ENCODE measurements at regions of chr4 and their contacts with region 1.

Region 1: GRCh38 chr4:158578476-158578875 is 56.8 kb downstream of the RXFP1 start:
- DNase-seq: no peak
- H3K4me3 ChIP-seq: no peak overlapping the region
- H3K27ac ChIP-seq: no peak overlapping the region
- H3K27me3 ChIP-seq: no peaks in the 10 kb centered on the region
- CTCF ChIP-seq: peak; percentile 58

Region 2: DNA sequence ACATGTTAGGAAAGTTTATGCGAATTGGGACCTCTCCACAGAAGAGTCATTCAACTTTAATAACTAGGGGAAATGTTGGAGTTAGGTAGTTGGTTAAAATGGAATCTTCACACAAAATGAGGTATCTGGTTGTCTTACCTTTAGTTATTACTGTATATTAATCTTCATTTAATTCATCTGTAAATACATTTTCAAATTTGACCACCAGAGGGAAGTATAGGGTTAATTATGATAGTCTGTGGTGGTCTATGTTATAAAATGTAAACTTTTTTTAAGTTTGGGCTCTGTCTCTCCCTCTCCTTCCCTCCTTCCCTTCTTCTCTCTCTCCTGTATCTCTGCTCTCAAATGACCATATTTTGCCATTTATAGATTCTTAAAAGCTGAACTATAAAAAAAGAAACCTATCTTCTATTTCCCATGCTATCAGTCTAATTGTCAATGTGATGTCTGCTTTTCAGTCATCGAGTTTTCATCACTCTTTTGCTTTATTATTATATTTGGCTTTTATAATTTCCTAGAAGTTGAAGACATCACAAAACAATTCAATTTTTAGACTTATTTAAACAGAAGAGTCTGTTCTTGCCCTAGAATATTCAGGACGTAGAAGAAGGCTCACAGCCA is 318.4 kb before region 1 on chr4:
- CTCF ChIA-PET with region 1: interaction called, 14 read pairs
- POLR2A ChIA-PET with region 1: no interaction called
- DNase-seq: no peak
- H3K4me3 ChIP-seq: no peak overlapping the region
- H3K27ac ChIP-seq: no peak overlapping the region
- H3K27me3 ChIP-seq: no peaks in the 10 kb centered on the region
- CTCF ChIP-seq: peak; percentile 35

Region 3: GRCh38 chr4:158314756-158315487 is 263.6 kb before region 1 on chr4:
- CTCF ChIA-PET with region 1: no interaction called
- POLR2A ChIA-PET with region 1: no interaction called
- DNase-seq: peak; percentile 90
- H3K4me3 ChIP-seq: no peak overlapping the region
- H3K27ac ChIP-seq: peak overlapping the region; percentile 98
- H3K27me3 ChIP-seq: no peaks in the 10 kb centered on the region
- CTCF ChIP-seq: no peak

Measured in AG04450 (cell line).